ENCODE measurements at regions of chr10 and their contacts with region 1.

Region 1: GRCh38 chr10:6843481-6843881 is 263.4 kb upstream of the PRKCQ start:
- DNase-seq: peak in 8 of 10 donors; percentile 35 to 80 (median 58)
- H3K4me3 ChIP-seq: peak overlapping the region in 8 of 59 donors; percentile 7 to 41 (median 24)
- H3K27ac ChIP-seq: peak overlapping the region in 35 of 59 donors; percentile 2 to 82 (median 50)
- H3K27me3 ChIP-seq: no peaks in the 10 kb centered on the region
- CTCF ChIP-seq: peak in 53 of 56 donors; percentile 16 to 77 (median 49)

Region 2: GRCh38 chr10:6786579-6787031 is 56.9 kb before region 1 on chr10:
- intact Hi-C with region 1: loop called in 1 of 2 experiments (anchors 5 kb)
- DNase-seq: peak in 9 of 10 donors; percentile 12 to 64 (median 49)
- H3K4me3 ChIP-seq: peak overlapping the region in 21 of 59 donors; percentile 1 to 40 (median 17)
- H3K27ac ChIP-seq: peak overlapping the region in 21 of 59 donors; percentile 8 to 85 (median 46)
- H3K27me3 ChIP-seq: peaks cover 0 to 14% (median 0%) of the 10 kb centered on the region in 45 donors
- CTCF ChIP-seq: peak; percentile 30 to 82 (median 61)

Region 3: DNA sequence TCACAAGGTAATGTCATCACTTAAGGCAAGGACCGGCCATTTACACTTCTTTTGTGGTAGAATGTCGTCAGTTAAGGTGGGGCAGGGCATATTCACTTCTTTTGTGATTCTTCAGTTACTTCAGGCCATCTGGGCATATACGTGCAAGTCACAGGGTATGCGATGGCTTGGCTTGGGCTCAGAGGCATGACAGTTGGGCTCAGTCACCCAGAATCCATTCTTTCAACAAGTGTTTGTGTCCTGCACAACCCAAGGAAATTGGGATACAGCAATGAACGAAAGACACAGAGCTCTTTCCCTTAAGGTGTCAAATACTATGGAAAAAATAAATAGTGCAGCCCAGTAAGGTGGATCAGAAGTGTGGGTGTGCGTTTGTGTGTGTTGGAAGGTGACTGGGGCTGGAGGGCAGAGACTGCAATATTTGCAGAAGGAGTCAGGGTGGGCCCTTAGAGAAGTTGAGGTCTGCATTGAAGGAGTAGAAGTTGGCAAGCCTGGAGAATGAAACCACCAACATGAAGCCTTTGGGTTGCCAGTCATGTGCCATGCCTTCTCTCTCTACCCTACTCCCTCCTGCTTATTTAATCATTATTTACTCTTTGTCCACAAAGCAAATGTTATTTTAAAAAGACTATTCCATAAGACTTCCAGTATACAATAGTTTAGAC is 40.6 kb before region 1 on chr10:
- intact Hi-C with region 1: no loop called
- DNase-seq: no peak
- H3K4me3 ChIP-seq: no peak overlapping the region
- H3K27ac ChIP-seq: no peak overlapping the region
- H3K27me3 ChIP-seq: no peaks in the 10 kb centered on the region
- CTCF ChIP-seq: no peak

Region 4: GRCh38 chr10:6973899-6974298 is 130.4 kb after region 1 on chr10:
- intact Hi-C with region 1: loop called in 1 of 2 experiments (anchors 10 kb)
- DNase-seq: no peak
- H3K4me3 ChIP-seq: no peak overlapping the region
- H3K27ac ChIP-seq: peak overlapping the region in 1 of 59 donors; percentile 48
- H3K27me3 ChIP-seq: peaks cover 0 to 4% (median 0%) of the 10 kb centered on the region in 45 donors
- CTCF ChIP-seq: no peak

Measured in dorsolateral prefrontal cortex (tissue), 120 donors.